Activated T-helper 2 cell treated with anti-CD3 and anti-CD28 coated beads, Interferon-gamma antibody, Interleukin-2, Interleukin-4, amounts not matched to agents 10 μg/mL and 5 μg/mL and 100 μg/mL, durations not matched to agents 14 hours and 24 hours and 36 hours (primary cell): ENCODE measurements at regions of chr19 and their contacts with region 1.

Region 1: DNA sequence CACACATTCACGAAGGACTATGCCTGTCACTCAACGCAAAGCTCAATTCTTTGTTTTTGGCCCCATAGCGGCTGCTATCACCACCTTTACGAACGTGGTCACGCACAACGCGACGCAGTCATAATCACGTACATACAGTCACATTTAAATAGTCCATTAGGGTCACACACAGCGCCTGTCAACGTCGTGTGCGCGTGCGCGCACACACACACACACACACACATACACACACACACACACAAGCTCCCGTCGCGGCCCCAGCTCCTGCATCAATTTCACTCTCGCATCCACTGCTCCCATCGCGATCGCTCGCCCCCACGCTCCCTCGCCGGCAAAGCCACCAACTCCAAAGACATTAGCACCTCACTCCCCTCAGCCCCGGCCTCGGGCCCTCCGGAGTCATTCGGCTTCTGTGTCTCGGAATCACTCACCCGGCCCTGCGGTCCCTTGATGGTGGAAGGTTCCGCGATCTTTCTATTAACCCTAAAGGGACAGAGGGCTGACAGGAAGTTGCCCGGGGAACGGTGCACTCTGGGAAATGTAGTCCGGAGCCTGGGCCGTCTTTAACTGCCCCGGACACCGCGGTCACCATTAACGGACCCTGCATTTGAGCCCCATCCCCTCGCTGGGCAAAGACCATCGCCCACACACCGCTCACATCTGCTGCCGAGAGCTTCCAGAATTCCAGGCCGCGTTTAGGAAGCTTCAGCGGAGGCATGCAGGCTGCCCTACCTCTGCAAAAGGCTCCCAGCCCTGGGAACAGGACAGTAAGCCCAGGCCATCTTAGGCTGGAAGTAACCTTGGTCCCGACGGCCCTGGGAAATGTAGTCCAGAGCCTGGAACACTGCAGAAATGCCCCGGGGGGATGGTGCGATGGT is at the start of gene ZNF790:
- DNase-seq: peak; percentile 77
- H3K4me3 Mint-ChIP-seq: no peak within 1 kb of the TSS
- H3K27ac Mint-ChIP-seq: no peak within 1 kb of the TSS
- H3K4me1 Mint-ChIP-seq: peaks cover 2% of the 10 kb centered on the region
- H3K27me3 Mint-ChIP-seq: no peaks in the 10 kb centered on the region
- total RNA-seq, gene ZNF790: 4.6 TPM in 2 replicates

Region 2: GRCh38 chr19:36797786-36798108 is 40.4 kb before region 1 on chr19:
- intact Hi-C with region 1: loop called (anchors 1 kb)
- DNase-seq: no peak
- H3K4me3 Mint-ChIP-seq: peak overlapping the region; percentile 79
- H3K27ac Mint-ChIP-seq: peak overlapping the region; percentile 16
- H3K4me1 Mint-ChIP-seq: peaks cover 3% of the 10 kb centered on the region
- H3K27me3 Mint-ChIP-seq: no peaks in the 10 kb centered on the region